ENCODE measurements at regions of chr5 and their contacts with region 1.

Region 1: GRCh38 chr5:153496835-153497234 is 6.4 kb downstream of the GRIA1 start:
- DNase-seq: peak; percentile 57
- ATAC-seq: peak; percentile 86
- H3K4me3 ChIP-seq: no peak overlapping the region
- H3K27ac ChIP-seq: no peak overlapping the region
- H3K4me1 ChIP-seq: no peaks in the 10 kb centered on the region; the same call in none of the 2 replicates
- H3K27me3 ChIP-seq: no peaks in the 10 kb centered on the region; the same call in 1 of the 2 replicates
- CTCF ChIP-seq: peak; percentile 93
- POLR2A ChIP-seq: peak; percentile 54
- RAD21 ChIP-seq: peak; percentile 96

Region 2: DNA sequence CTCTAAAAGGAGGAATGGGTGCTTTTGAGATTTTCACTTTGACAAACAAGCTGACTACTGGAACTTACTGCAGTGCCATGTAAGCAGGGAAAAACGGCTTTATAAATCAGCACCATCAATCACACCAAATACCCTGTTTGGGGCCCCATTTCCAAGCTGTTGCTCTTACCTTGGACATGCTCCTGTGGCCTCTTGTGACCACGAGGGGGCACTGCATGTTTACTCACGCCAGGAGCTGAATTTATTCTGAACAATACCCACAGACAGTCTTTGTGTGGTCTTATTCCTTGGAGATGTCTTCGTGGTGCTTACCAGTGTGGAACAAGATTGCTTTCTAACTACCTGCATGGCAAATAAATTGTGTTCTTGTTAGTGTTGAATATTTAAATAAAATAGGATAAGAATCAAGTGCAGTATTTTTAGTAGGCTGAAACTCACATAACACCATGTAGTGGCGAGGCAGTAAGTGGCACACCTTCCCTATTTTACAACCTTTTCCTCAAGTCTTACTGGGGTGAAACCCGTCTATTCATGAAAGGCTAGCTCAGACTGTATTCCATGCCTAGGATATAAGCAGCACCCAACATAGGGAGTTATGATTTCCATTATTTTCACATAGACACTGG is 936.2 kb before region 1 on chr5:
- CTCF ChIA-PET with region 1: no interaction called
- POLR2A ChIA-PET with region 1: no interaction called
- dilution Hi-C with region 1: no loop called
- in situ Hi-C with region 1: no loop called
- intact Hi-C with region 1: no loop called
- DNase-seq: peak; percentile 12
- ATAC-seq: no peak
- H3K4me3 ChIP-seq: no peak overlapping the region
- H3K27ac ChIP-seq: no peak overlapping the region
- H3K4me1 ChIP-seq: no peaks in the 10 kb centered on the region
- H3K27me3 ChIP-seq: no peaks in the 10 kb centered on the region
- CTCF ChIP-seq: peak; percentile 51
- POLR2A ChIP-seq: no peak
- RAD21 ChIP-seq: peak; percentile 50; the same call in 1 of the 2 replicates

Region 3: DNA sequence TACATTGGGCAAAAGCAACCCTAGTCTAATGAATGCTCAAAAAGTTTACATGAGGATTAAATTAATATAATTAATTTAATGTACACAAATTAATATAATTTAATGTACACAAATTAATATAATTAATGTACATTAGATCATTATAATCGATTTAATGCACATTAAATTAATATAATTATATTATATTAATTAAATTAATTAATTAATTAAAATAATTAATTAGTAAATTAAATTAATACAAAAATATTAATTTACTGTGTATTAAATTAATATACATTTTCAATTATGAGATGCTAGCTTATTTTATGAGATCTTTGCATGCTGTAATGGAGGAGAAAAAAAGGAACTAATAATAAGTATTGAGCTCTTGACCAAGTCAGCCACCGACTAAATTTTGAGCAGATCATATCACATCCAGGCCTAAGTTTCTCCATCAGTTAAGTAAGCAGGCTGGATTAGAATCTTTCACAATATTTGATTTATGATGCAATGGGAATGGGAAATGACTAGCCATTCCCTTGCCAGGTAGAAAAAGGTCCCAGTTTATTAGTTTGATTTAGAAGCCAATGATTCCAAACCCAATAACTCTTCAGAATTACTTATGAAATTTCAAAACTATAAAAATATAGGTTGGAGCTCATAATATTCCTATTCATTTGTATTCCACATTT is 539.8 kb before region 1 on chr5:
- CTCF ChIA-PET with region 1: no interaction called
- POLR2A ChIA-PET with region 1: no interaction called
- dilution Hi-C with region 1: no loop called
- in situ Hi-C with region 1: no loop called
- intact Hi-C with region 1: no loop called
- DNase-seq: no peak
- ATAC-seq: no peak
- H3K4me3 ChIP-seq: no peak overlapping the region
- H3K27ac ChIP-seq: no peak overlapping the region
- H3K4me1 ChIP-seq: no peaks in the 10 kb centered on the region
- H3K27me3 ChIP-seq: no peaks in the 10 kb centered on the region
- CTCF ChIP-seq: no peak
- POLR2A ChIP-seq: no peak
- RAD21 ChIP-seq: no peak

Region 4: GRCh38 chr5:153619771-153620170 is 122.9 kb after region 1 on chr5:
- CTCF ChIA-PET with region 1: no interaction called
- POLR2A ChIA-PET with region 1: no interaction called
- dilution Hi-C with region 1: no loop called
- in situ Hi-C with region 1: no loop called
- intact Hi-C with region 1: loop called (anchors 2 kb)
- DNase-seq: peak; percentile 69
- ATAC-seq: peak; percentile 48
- H3K4me3 ChIP-seq: no peak overlapping the region
- H3K27ac ChIP-seq: peak overlapping the region; percentile 30; the same call in 1 of the 2 replicates
- H3K4me1 ChIP-seq: peaks cover 8% of the 10 kb centered on the region
- H3K27me3 ChIP-seq: no peaks in the 10 kb centered on the region
- CTCF ChIP-seq: no peak
- POLR2A ChIP-seq: no peak
- RAD21 ChIP-seq: no peak

Region 5: DNA sequence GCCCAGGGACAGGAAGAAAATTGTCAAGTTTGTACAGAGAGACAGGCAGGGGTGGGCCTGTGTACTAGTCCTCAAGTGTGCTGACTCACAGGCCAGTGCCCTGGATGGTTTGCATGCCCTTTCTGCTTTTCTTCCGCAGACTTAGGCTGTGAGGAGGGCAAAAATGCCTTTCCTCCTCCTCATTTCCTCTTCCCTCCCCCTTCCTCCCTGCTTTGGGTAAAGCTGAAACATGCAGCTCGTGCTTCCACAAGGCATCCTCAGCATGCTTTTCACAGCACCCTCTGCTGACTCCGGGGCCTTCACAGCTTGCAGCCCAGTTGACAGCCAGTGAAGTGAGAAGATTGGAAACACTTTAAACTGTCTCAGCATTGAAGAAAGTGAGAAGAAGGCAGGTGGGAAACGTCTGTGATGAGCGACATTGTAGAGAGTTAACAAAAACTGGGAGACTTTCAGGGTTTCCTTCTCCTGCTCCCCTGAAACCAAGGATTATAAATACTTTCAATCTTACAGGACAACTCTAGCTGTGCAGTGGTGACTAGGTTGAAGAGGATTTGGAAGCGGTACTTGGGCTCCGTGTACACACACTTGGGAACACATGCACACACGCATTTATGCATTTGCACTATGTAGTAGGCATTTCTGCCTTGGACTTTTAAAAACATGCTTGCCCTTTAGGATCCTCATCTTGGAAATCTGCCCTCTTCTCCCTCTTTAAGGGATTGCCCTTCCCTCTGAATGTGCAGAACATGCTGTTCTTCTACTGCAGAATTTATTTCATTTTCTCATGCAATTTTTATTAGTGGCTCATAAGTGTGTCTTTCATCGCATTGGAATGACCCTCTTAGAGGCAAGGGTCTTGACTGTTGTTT is 132.4 kb after region 1 on chr5:
- CTCF ChIA-PET with region 1: interaction called, 13 read pairs
- POLR2A ChIA-PET with region 1: no interaction called
- dilution Hi-C with region 1: no loop called
- in situ Hi-C with region 1: no loop called
- intact Hi-C with region 1: loop called (anchors 1 kb)
- DNase-seq: peak; percentile 97
- ATAC-seq: peak; percentile 97
- H3K4me3 ChIP-seq: no peak overlapping the region
- H3K27ac ChIP-seq: peak overlapping the region; percentile 84
- H3K4me1 ChIP-seq: peaks cover 8% of the 10 kb centered on the region
- H3K27me3 ChIP-seq: no peaks in the 10 kb centered on the region
- CTCF ChIP-seq: peak; percentile 54
- POLR2A ChIP-seq: no peak
- RAD21 ChIP-seq: peak; percentile 60

Region 6: DNA sequence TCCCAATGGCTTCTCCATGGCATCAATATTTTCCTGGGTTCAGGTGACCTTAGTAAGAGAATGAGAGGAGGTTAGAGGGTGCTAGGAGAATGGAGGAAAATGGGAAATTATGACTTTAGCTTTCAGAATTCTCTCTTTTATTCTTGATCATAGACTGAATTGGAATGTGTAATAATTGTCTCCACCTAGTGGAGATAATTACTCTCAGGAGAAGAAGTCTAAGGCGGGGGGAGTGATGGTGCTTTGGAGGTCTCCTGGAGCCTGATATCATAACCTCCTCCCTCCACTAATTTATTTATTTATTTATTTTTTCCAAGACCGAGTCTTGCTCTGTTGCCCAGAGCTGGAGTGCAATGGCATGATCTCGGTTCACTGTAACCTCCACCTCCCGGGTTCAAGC is 214.9 kb after region 1 on chr5:
- CTCF ChIA-PET with region 1: interaction called, 4 read pairs
- POLR2A ChIA-PET with region 1: no interaction called
- dilution Hi-C with region 1: no loop called
- in situ Hi-C with region 1: no loop called
- intact Hi-C with region 1: loop called (anchors 1 kb)
- DNase-seq: peak; percentile 6
- ATAC-seq: 0 out of 2 replicates have a peak, but pooled peaks have one; percentile 27
- H3K4me3 ChIP-seq: no peak overlapping the region
- H3K27ac ChIP-seq: no peak overlapping the region
- H3K4me1 ChIP-seq: no peaks in the 10 kb centered on the region
- H3K27me3 ChIP-seq: no peaks in the 10 kb centered on the region
- CTCF ChIP-seq: peak; percentile 48
- POLR2A ChIP-seq: no peak
- RAD21 ChIP-seq: peak; percentile 54

Region 7: GRCh38 chr5:153756540-153756939 is 259.7 kb after region 1 on chr5:
- CTCF ChIA-PET with region 1: no interaction called
- POLR2A ChIA-PET with region 1: no interaction called
- dilution Hi-C with region 1: no loop called
- in situ Hi-C with region 1: no loop called
- intact Hi-C with region 1: loop called (anchors 1 kb)
- DNase-seq: peak; percentile 6
- ATAC-seq: peak; percentile 21; the same call in 1 of the 2 replicates
- H3K4me3 ChIP-seq: no peak overlapping the region
- H3K27ac ChIP-seq: no peak overlapping the region
- H3K4me1 ChIP-seq: no peaks in the 10 kb centered on the region
- H3K27me3 ChIP-seq: no peaks in the 10 kb centered on the region
- CTCF ChIP-seq: peak; percentile 32
- POLR2A ChIP-seq: no peak
- RAD21 ChIP-seq: peak; percentile 38

Region 8: GRCh38 chr5:153900703-153901395 is 404.0 kb after region 1 on chr5:
- CTCF ChIA-PET with region 1: interaction called, 3 read pairs
- POLR2A ChIA-PET with region 1: no interaction called
- dilution Hi-C with region 1: no loop called
- in situ Hi-C with region 1: no loop called
- intact Hi-C with region 1: loop called (anchors 2 kb)
- DNase-seq: peak; percentile 75
- ATAC-seq: peak; percentile 65
- H3K4me3 ChIP-seq: no peak overlapping the region
- H3K27ac ChIP-seq: peak overlapping the region; percentile 100
- H3K4me1 ChIP-seq: peaks cover 8% of the 10 kb centered on the region
- H3K27me3 ChIP-seq: no peaks in the 10 kb centered on the region
- CTCF ChIP-seq: no peak
- POLR2A ChIP-seq: no peak
- RAD21 ChIP-seq: no peak

Measured in IMR-90 (cell line).